ENCODE measurements at regions of chr16 and their contacts with region 1.

Region 1: DNA sequence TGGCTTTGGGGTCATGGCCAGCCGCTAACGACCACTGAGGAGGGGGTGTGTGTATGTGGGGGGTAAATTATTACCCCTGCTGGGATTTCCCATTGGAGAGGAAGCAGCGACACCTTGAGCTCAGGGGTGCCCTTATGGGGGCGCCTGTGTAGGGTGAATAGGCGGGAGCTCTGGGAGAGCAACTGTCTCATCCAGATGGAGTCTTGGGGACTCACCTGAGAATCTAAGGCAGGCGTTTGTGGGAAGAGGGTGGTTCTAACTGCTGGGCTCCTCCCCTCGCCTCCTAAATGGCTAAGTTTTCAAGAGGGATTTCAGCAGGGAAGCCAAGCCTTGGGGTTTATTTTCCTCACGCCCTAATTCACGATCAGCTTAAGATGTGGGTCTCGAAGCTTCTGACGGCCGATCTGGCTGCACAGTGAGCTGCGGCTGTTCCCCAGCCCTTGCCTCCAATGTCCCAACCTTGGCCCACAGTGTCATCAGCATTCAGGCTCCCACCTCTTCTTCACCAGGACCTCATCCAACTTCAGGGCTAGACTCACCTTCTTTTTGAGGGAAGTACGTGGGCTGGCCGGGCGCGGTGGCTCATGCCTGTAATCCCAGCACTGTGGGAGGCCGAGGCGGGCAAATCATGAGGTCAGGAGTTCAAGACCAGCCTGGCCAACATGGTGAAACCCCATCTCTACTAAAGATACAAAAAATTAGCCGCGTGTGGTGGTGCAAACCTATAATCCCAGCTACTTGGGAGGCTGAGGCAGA is 136.9 kb upstream of the EEF2KMT start:
- DNase-seq: no peak
- H3K4me3 Mint-ChIP-seq: no peak overlapping the region
- H3K27ac Mint-ChIP-seq: no peak overlapping the region
- H3K4me1 Mint-ChIP-seq: peaks cover 2% of the 10 kb centered on the region
- H3K27me3 Mint-ChIP-seq: peaks cover 6% of the 10 kb centered on the region

Region 2: GRCh38 chr16:5450409-5451104 is 216.1 kb after region 1 on chr16:
- intact Hi-C with region 1: no loop called
- DNase-seq: no peak
- H3K4me3 Mint-ChIP-seq: no peak overlapping the region
- H3K27ac Mint-ChIP-seq: no peak overlapping the region
- H3K4me1 Mint-ChIP-seq: no peaks in the 10 kb centered on the region
- H3K27me3 Mint-ChIP-seq: no peaks in the 10 kb centered on the region

Region 3: DNA sequence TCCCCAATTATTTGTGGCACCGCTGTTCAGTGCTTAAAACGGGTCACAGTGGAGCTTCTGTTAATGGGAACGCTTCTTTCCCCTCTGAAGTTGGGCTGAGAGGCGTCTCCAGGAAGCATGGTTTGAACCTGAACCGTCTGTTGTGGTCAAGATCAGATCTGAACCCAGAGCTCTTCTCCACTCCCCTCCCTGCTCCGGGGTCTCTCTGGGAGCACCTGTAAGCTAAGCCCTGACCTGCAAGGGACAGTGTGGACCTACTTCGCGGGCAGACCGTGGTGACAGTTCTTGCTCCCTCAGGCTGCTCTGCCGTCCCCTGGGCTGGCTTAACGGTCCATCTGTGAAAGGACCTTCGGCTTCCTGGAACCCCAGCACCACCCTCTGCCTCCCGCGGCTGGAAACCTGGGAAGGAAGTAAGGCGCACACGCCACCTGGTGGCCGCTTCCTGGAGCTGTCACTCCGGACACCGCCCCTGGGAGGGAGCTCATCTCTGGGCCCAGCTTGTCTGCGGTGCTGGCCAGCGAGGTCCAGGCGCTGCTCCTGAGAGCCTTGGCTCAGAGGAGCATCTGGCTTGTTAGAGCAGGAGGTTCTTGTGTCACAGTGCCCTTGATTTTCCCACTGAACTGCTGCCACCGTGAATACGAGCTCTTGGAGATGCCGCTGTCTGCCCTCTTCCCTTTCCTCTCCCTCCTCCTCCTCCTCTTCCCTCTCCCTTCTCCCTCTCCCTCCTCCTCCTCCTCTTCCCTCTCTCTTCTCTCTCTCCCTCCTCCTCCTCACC is 381.6 kb after region 1 on chr16:
- intact Hi-C with region 1: loop called (anchors 10 kb)
- DNase-seq: peak; percentile 14
- H3K4me3 Mint-ChIP-seq: peak overlapping the region; percentile 44
- H3K27ac Mint-ChIP-seq: no peak overlapping the region
- H3K4me1 Mint-ChIP-seq: peaks cover 2% of the 10 kb centered on the region
- H3K27me3 Mint-ChIP-seq: no peaks in the 10 kb centered on the region

Region 4: DNA sequence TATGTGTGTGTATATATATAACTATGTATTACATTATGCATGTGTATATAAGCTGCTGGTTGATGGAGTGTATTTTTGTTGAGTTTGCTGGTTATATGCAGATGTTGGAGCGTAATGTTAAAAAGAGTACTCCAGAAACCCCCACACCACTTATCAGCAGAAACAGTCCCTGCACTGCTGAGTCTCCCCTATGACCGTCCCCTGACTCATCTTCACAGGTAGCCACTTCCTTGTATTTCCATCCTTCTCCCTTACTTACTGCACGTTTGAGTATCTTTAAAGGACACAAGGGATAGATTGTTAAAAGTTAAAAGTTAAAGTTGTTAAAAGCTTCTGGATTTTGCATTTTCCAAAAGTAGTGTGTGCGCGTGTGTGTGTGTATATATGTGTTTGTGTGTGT is 717.0 kb after region 1 on chr16:
- intact Hi-C with region 1: no loop called
- DNase-seq: no peak
- H3K4me3 Mint-ChIP-seq: no peak overlapping the region
- H3K27ac Mint-ChIP-seq: no peak overlapping the region
- H3K4me1 Mint-ChIP-seq: no peaks in the 10 kb centered on the region
- H3K27me3 Mint-ChIP-seq: no peaks in the 10 kb centered on the region